GM12878 (cell line): ENCODE measurements at regions of chr1 and their contacts with region 1.

Region 1: GRCh38 chr1:206912445-206913095 is 9.2 kb downstream of the FCMR start:
- DNase-seq: no peak
- ATAC-seq: peak; percentile 78
- H3K4me3 ChIP-seq: no peak overlapping the region
- H3K27ac ChIP-seq: no peak overlapping the region
- H3K4me1 ChIP-seq: peaks cover 38% of the 10 kb centered on the region
- H3K27me3 ChIP-seq: no peaks in the 10 kb centered on the region
- CTCF ChIP-seq: peak; percentile 71 to 90 (median 77); a peak in 5 of 6 replicates
- EP300 ChIP-seq: no peak
- POLR2A ChIP-seq: peak; percentile 40; the same call in 1 of the 2 replicates
- RAD21 ChIP-seq: peak; percentile 76

Region 2: GRCh38 chr1:206507284-206508129 is 405.1 kb before region 1 on chr1 and contains the start of gene RASSF5:
- CTCF ChIA-PET with region 1: no interaction called
- POLR2A ChIA-PET with region 1: no interaction called
- RAD21 ChIA-PET with region 1: no interaction called
- SMC1A ChIA-PET with region 1: no interaction called
- in situ Hi-C with region 1: no loop called
- intact Hi-C with region 1: loop called (anchors 10 kb)
- DNase-seq: no peak
- ATAC-seq: peak; percentile 78
- H3K4me3 ChIP-seq: peak within 1 kb of the TSS; percentile 72
- H3K27ac ChIP-seq: peak within 1 kb of the TSS; percentile 29; the same call in 1 of the 2 replicates
- H3K4me1 ChIP-seq: peaks cover 41% of the 10 kb centered on the region
- H3K27me3 ChIP-seq: no peaks in the 10 kb centered on the region
- CTCF ChIP-seq: no peak
- EP300 ChIP-seq: 0 out of 4 replicates have a peak, but pooled peaks of 1 of the 2 experiments have one; percentile 21
- POLR2A ChIP-seq: peak; percentile 83
- RAD21 ChIP-seq: no peak
- polyA plus RNA-seq, gene RASSF5: 14.0 to 25.4 TPM

Region 3: GRCh38 chr1:206725109-206725963 is 187.2 kb before region 1 on chr1:
- CTCF ChIA-PET with region 1: interaction called, 59 read pairs
- POLR2A ChIA-PET with region 1: no interaction called
- RAD21 ChIA-PET with region 1: interaction called, 7 read pairs
- SMC1A ChIA-PET with region 1: interaction called, 26 read pairs
- in situ Hi-C with region 1: loop called (anchors 5 kb)
- intact Hi-C with region 1: loop called (anchors 1 kb)
- DNase-seq: no peak
- ATAC-seq: peak; percentile 84
- H3K4me3 ChIP-seq: no peak overlapping the region
- H3K27ac ChIP-seq: 0 out of 2 replicates have a peak overlapping the region, but pooled peaks have one; percentile 34
- H3K4me1 ChIP-seq: peaks cover 29% of the 10 kb centered on the region
- H3K27me3 ChIP-seq: no peaks in the 10 kb centered on the region
- CTCF ChIP-seq: peak; percentile 59 to 78 (median 73)
- EP300 ChIP-seq: no peak
- POLR2A ChIP-seq: no peak
- RAD21 ChIP-seq: peak; percentile 53

Region 4: GRCh38 chr1:206814716-206815341 is 97.7 kb before region 1 on chr1:
- CTCF ChIA-PET with region 1: interaction called, 137 read pairs
- POLR2A ChIA-PET with region 1: interaction called, 6 read pairs
- RAD21 ChIA-PET with region 1: interaction called, 35 read pairs
- SMC1A ChIA-PET with region 1: interaction called, 64 read pairs
- in situ Hi-C with region 1: loop called (anchors 5 kb)
- intact Hi-C with region 1: no loop called
- DNase-seq: no peak
- ATAC-seq: peak; percentile 42
- H3K4me3 ChIP-seq: no peak overlapping the region
- H3K27ac ChIP-seq: no peak overlapping the region; the same call in 1 of the 2 replicates
- H3K4me1 ChIP-seq: peaks cover 27% of the 10 kb centered on the region
- H3K27me3 ChIP-seq: no peaks in the 10 kb centered on the region
- CTCF ChIP-seq: no peak
- EP300 ChIP-seq: no peak
- POLR2A ChIP-seq: no peak
- RAD21 ChIP-seq: no peak

Region 5: GRCh38 chr1:206878456-206878855 is 34.1 kb before region 1 on chr1:
- CTCF ChIA-PET with region 1: interaction called, 20 read pairs
- POLR2A ChIA-PET with region 1: interaction called, 3 read pairs
- RAD21 ChIA-PET with region 1: interaction called, 3 read pairs
- SMC1A ChIA-PET with region 1: interaction called, 16 read pairs
- in situ Hi-C with region 1: no loop called
- intact Hi-C with region 1: no loop called
- DNase-seq: no peak
- ATAC-seq: no peak
- H3K4me3 ChIP-seq: no peak overlapping the region
- H3K27ac ChIP-seq: no peak overlapping the region
- H3K4me1 ChIP-seq: no peaks in the 10 kb centered on the region
- H3K27me3 ChIP-seq: no peaks in the 10 kb centered on the region
- CTCF ChIP-seq: peak in 2 of 3 experiments; percentile 6 to 7; a peak in 1 of 6 replicates
- EP300 ChIP-seq: no peak
- POLR2A ChIP-seq: no peak
- RAD21 ChIP-seq: no peak

Region 6: GRCh38 chr1:206935491-206936067 is 23.0 kb after region 1 on chr1:
- CTCF ChIA-PET with region 1: interaction called, 643 read pairs
- POLR2A ChIA-PET with region 1: interaction called, 222 read pairs
- RAD21 ChIA-PET with region 1: interaction called, 371 read pairs
- SMC1A ChIA-PET with region 1: interaction called, 431 read pairs
- in situ Hi-C with region 1: no loop called
- intact Hi-C with region 1: loop called (anchors 1 kb)
- DNase-seq: no peak
- ATAC-seq: peak; percentile 64
- H3K4me3 ChIP-seq: no peak overlapping the region
- H3K27ac ChIP-seq: no peak overlapping the region
- H3K4me1 ChIP-seq: peaks cover 27% of the 10 kb centered on the region
- H3K27me3 ChIP-seq: no peaks in the 10 kb centered on the region
- CTCF ChIP-seq: peak; percentile 44 to 71 (median 57)
- EP300 ChIP-seq: no peak
- POLR2A ChIP-seq: no peak
- RAD21 ChIP-seq: peak; percentile 36; the same call in 1 of the 2 replicates

Region 7: DNA sequence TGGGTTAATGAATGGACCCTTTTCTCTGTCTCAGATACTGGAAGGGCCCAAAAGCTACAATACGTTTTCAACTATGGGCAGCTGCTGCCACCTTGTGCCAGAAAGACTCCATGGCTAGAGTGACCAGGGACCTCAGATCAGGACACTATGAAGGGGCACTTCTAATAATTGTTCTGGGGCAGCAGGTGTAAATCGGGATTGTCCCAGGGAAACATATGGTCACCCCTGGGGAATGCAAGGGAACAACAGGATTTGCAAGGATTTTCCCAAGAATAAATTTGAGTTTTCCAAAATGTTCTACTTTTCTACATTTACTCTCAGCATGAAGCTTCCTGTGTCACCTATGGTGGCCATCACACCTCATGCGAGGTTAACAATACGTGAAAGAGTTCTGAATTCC is 69.6 kb after region 1 on chr1:
- CTCF ChIA-PET with region 1: interaction called, 298 read pairs
- POLR2A ChIA-PET with region 1: interaction called, 7 read pairs
- RAD21 ChIA-PET with region 1: interaction called, 97 read pairs
- SMC1A ChIA-PET with region 1: interaction called, 73 read pairs
- in situ Hi-C with region 1: no loop called
- intact Hi-C with region 1: loop called (anchors 1 kb)
- DNase-seq: no peak
- ATAC-seq: peak; percentile 98
- H3K4me3 ChIP-seq: no peak overlapping the region
- H3K27ac ChIP-seq: no peak overlapping the region
- H3K4me1 ChIP-seq: no peaks in the 10 kb centered on the region
- H3K27me3 ChIP-seq: no peaks in the 10 kb centered on the region; a peak in 1 of 4 replicates
- CTCF ChIP-seq: peak; percentile 85 to 94 (median 92)
- EP300 ChIP-seq: no peak
- POLR2A ChIP-seq: no peak
- RAD21 ChIP-seq: peak; percentile 97